ENCODE measurements at regions of chr11 and their contacts with region 1.

Region 1: GRCh38 chr11:19553683-19554333 is 158.8 kb upstream of the NAV2 start:
- DNase-seq: peak; percentile 78 to 98 (median 92)

Region 2: DNA sequence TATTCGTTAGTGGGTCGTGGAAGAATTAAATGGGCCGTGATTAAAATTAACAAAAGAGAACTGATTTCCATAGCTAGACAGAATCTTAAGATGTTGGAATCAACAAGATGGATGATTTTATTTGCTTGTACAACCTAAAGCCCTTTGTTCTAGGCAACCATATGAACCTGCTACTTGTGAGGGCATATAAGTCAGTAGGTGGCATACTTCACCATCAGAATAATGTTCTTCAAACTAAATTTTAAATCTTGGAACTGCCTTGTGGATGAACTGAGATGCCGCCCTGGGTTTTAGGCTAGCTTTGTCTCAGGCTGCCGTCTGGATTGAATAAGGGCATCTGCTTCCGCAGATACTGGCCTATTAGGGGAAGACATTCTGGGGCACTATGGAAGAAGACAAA is 393.0 kb before region 1 on chr11:
- intact Hi-C with region 1: loop called (anchors 5 kb)
- DNase-seq: no peak

Region 3: DNA sequence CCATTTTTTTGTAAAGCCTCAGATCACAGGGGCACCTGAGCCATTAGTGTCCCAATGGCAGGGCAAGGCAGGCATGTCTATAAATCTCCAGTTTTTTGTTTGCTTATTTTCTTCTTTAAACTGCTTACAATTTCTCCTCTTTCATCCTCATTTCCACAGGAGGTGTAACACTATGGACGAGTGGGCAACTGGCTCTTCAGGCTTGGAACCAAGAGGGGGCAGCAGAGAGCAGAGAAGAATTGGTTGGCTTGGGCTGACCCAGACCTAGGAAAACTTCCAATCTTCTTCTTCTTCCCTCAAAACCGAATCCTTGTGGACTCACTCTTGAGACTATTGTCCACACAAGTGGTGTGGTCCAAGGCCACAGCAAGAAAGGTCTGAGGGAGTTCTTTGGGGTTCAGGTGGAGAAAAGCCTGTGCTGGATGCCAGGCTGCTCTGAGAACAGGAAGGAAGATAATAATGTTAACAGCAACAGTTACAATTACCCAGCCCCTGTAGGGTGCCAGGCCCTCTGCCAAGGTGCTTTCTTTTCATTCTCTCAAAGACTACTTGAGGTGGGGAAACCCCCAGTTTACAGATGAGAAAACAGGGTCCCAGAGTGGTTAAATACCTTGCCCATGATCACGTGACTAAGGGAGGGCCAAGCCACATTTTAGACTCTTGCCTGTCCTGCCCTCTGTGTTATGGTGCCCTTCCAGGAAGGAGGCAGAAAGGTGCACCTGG is 242.3 kb before region 1 on chr11:
- intact Hi-C with region 1: loop called (anchors 1 kb)
- DNase-seq: peak; percentile 48 to 93 (median 82)

Region 4: DNA sequence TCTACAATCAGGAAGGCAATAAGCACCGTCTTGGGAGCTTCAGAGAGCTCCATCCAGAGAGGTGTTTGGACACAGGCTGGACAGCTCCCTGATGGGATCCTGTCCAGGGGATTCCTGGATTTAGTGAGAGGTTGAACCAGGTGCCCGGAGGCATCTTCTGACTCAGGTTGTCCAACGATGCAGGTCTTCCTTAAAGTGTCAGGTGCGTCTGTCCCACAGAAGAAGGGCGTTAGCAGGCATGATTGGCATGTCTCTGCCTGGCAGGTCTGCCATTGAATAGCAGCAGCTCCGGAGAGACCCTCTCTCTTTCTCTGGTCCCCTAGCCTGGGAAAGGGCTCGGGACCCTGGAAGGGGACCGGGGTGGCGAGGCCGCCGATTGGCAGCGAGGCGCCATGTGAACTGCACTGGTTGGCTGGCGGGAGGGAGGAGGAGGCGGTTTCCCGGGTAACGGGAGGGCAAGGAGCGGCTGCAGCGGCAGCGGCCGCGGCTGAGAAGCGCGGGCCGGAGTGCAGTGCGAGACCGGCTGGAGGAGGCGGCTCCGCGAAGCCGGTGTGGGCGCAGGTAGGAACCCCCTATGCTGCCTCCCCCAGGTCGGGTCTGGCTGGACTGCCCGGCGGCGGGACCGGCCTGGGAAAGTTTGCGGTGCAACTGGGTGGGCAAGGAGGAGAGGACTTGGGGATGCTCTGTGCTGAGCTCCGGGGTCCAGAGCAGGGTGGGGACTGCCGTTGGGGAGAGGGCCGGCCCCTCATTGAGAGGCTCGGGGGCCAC is 208.9 kb before region 1 on chr11:
- intact Hi-C with region 1: loop called (anchors 5 kb)
- DNase-seq: peak; percentile 71 to 98 (median 80)

Region 5: GRCh38 chr11:19511413-19512183 is 42.2 kb before region 1 on chr11:
- intact Hi-C with region 1: no loop called
- DNase-seq: peak; percentile 38 to 94 (median 72)